AG04449 (cell line): ENCODE measurements at regions of chr22 and their contacts with region 1.

Region 1: GRCh38 chr22:26502688-26503561 is 9.3 kb downstream of the TFIP11 start:
- DNase-seq: no peak
- H3K4me3 ChIP-seq: no peak overlapping the region
- CTCF ChIP-seq: peak; percentile 64

Region 2: DNA sequence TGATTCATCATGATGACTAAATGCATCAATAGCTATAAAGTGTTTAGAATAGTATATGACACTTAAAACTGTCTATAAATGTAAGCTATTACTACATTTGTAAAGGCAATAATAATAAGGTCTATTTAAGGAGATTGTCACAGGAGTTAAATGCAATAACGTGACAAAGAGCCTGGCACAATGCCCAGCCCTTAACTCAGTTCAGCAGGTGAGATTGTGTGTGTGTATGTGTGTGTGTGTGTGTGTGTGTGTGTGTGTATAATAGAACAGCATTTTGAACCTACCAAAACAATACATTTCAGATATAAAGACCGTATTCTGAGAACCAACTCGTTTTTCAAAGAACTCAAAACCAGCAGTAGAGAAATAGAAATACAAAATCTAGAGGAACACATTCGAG is 583.5 kb before region 1 on chr22:
- CTCF ChIA-PET with region 1: no interaction called
- POLR2A ChIA-PET with region 1: no interaction called
- DNase-seq: no peak
- H3K4me3 ChIP-seq: no peak overlapping the region
- CTCF ChIP-seq: no peak

Region 3: GRCh38 chr22:26483439-26484359 is 19.2 kb before region 1 on chr22 and contains the starts of genes HPS4 and SRRD:
- CTCF ChIA-PET with region 1: interaction called, 23 read pairs
- POLR2A ChIA-PET with region 1: no interaction called
- DNase-seq: peak; percentile 46
- H3K4me3 ChIP-seq: peak within 1 kb of the TSS; percentile 92
- CTCF ChIP-seq: no peak

Region 4: GRCh38 chr22:26492220-26492619 is 10.7 kb before region 1 on chr22:
- CTCF ChIA-PET with region 1: interaction called, 13 read pairs
- POLR2A ChIA-PET with region 1: no interaction called
- DNase-seq: no peak
- H3K4me3 ChIP-seq: no peak overlapping the region
- CTCF ChIP-seq: no peak

Region 5: DNA sequence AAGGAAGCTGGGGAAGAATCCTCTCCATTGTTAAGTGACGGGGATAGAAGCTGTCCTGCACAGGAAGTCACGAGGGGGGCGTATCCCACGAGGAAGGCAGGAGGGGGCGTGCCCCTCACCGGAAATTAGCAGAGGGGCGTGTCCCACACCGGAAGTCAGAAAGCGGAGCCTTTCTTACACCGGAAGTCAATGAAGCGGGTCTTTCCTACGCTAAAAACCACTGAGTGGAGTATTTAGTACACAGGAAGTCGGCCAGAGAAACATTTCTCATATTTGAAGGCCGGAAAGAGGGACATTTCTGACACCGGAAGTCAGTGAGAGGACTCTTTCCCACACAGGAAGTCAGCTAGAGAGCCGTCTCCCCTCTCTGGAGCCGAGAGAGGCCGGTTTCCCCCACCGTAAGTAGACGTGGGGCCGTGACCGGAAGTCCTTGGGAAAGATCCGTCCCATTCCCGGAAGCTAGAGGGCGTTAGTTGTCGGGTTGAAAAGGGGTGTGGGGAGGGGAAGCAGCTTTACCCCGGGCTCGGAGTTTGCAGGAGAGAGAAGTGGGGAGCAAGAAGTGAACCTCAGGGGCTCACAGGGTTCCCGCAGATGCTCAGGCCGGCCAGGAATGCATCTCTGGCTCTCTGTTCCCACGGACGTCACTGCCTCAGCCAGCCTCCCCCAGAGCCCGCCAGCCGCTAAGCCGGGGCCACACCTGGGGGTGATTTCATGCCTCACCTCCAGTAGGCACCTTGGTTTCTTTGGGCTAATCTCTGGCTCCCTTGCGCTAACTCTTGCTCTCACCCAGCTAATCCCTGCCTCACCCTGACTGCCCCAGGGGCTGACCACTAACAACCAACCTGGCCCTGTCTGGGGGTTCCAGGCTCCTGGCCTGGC is 169.9 kb after region 1 on chr22:
- CTCF ChIA-PET with region 1: interaction called, 150 read pairs
- POLR2A ChIA-PET with region 1: no interaction called
- DNase-seq: peak; percentile 71
- H3K4me3 ChIP-seq: peak overlapping the region; percentile 95
- CTCF ChIP-seq: peak; percentile 70